ENCODE measurements at regions of chr13 and their contacts with region 1.

Region 1: DNA sequence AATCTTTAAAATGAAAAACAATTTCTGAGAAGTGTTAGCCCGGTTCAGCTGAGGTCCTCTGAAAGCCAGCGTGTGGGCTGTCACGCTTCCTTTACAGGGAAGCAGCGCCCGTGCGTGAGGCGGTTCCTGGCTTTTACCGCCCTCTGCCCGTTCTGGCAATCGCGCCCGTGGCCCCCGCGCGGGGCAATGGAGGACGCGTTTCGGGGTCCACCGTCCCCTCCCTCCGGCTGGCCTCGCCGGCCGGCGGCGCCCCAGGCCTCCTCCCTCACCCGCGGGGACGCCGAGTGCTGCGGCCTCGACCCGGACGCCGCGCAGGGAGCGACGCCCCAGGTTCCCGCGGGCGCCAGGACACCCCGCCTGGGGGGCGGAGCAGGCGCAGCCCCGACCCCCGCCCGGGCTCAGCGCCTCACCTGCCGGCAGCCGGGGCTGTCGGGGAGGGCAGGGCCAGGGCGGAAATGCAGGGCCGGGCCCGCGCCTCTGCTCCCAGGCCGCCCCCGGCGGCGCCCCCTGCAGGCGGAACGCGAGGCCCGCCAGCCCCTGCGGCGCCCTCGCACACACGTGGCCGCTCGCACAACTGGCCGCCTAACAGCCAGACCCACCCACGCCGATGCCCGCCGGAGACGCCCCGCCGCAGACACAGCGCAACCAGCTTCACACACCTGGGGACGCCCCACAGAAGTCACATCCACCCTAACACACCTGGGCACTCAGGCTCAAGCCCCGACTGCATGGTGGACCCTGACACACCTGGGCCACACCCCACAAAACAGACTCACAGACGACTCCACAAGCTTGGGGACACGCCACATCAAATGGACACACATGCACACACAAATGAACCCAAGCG is at the start of gene GGACT:
- DNase-seq: peak; percentile 79
- H3K4me3 Mint-ChIP-seq: peak within 1 kb of the TSS; percentile 87
- H3K27ac Mint-ChIP-seq: peak within 1 kb of the TSS; percentile 94
- H3K4me1 Mint-ChIP-seq: peaks cover 57% of the 10 kb centered on the region
- H3K27me3 Mint-ChIP-seq: no peaks in the 10 kb centered on the region
- total RNA-seq, gene GGACT: 4.0 and 7.2 TPM in 2 replicates

Region 2: DNA sequence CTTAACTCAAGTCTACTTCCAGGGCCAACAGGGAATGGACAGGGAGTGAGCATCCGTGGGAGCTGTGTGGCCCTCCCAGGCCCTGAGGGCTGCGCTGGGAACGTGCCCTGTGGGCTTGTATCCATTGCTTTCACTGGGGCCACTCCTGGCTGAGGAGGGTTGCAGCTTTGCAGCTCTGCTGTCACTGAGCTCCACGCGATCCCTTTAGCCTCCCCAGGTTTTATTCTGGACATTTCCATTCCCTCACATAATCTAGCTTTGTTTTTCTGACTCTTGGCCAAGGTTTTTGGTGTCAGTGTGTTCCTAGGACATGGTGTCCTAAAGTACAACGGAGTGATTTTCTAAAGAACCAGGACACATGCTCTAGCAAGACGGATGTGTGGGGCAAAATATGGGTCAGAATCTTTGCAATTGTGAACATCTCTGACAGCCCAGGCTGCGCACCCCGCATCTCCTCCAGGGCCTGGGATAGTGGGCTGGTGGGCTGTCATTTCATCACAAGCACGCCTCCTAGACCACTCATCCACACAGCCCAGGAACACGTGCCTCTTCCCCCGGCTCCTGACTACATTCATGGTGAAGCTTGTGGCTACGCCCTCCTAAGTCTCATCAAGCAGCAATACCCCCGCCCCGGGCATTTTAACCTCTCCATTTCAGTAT is 27.9 kb before region 1 on chr13:
- intact Hi-C with region 1: no loop called
- DNase-seq: no peak
- H3K4me3 Mint-ChIP-seq: no peak overlapping the region
- H3K27ac Mint-ChIP-seq: no peak overlapping the region
- H3K4me1 Mint-ChIP-seq: no peaks in the 10 kb centered on the region
- H3K27me3 Mint-ChIP-seq: peaks cover 5% of the 10 kb centered on the region

Region 3: DNA sequence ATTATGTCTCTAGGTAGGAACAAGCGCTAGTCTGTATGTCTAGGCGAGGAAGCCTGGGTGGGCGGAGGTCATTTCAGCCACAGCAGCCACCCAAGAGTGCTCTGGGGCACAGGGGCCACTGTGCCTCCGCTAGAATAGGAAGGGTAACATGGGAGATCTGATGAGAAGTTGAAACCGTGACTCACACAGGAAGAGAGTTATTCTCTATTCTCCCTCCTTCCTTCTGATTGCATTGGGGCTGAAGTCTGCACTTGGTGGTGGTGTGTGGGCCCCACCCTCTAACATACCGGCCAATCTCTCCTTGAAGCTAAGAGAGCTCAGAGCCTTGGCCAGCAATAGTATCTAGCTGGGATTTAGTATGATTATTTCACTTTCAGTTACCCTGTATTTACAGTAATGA is 20.4 kb after region 1 on chr13:
- intact Hi-C with region 1: loop called (anchors 2 kb)
- DNase-seq: no peak
- H3K4me3 Mint-ChIP-seq: no peak overlapping the region
- H3K27ac Mint-ChIP-seq: peak overlapping the region; percentile 35
- H3K4me1 Mint-ChIP-seq: peaks cover 35% of the 10 kb centered on the region
- H3K27me3 Mint-ChIP-seq: no peaks in the 10 kb centered on the region

Region 4: DNA sequence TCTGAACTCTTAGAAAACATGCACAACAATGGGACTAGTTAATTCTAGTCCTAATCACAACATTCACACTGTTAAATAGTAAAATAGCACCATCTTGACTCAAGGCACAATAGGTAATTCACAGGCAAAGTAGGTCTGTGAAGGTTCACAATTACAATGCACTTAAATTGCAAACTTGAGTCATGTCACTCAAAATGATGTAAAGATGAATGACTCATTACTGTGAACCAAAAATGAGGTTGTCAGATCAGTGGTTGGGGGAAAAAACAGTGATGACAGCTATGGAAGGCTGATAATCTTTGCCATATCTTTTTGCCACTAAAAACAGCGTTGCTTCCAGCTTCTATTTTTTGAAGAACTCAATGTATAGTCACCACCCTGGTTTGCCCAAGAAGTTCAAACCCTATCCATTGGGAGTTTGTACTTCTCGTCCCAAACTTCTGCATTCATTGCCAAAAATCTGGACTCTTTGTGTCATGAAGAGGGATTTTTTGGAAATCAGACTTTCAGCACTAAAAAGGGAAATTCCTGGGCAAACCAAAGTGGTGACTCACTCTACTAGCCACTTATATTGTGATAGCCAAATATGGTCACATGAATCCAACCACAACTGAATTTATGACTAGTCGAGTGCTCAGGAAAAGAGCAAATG is 287.0 kb after region 1 on chr13:
- intact Hi-C with region 1: loop called (anchors 5 kb)
- DNase-seq: peak; percentile 4
- H3K4me3 Mint-ChIP-seq: no peak overlapping the region
- H3K27ac Mint-ChIP-seq: peak overlapping the region; percentile 41
- H3K4me1 Mint-ChIP-seq: peaks cover 18% of the 10 kb centered on the region
- H3K27me3 Mint-ChIP-seq: peaks cover 5% of the 10 kb centered on the region

Measured in activated T-helper 1 cell treated with anti-CD3 and anti-CD28 coated beads, Interleukin-12 subunit alpha, Interleukin-12 subunit beta, Interleukin-2, Interleukin-4 antibody, amounts not matched to agents 30 ng/mL and 10 ng/mL and 1 ng/mL, durations not matched to agents 14 hours and 24 hours and 36 hours (primary cell).